ENCODE measurements at regions of chr2 and their contacts with region 1.

Region 1: GRCh38 chr2:210528716-210529115 is 27.7 kb upstream of the CPS1 start:
- DNase-seq: no peak
- ATAC-seq: no peak
- H3K4me3 ChIP-seq: no peak overlapping the region
- H3K4me3 Mint-ChIP-seq: no peak overlapping the region
- H3K27ac ChIP-seq: no peak overlapping the region
- H3K27ac Mint-ChIP-seq: no peak overlapping the region
- H3K4me1 ChIP-seq: no peaks in the 10 kb centered on the region
- H3K4me1 Mint-ChIP-seq: no peaks in the 10 kb centered on the region
- H3K27me3 ChIP-seq: no peaks in the 10 kb centered on the region
- H3K27me3 Mint-ChIP-seq: peaks cover 0 to 13% of the 10 kb centered on the region in 2 donors

Region 2: GRCh38 chr2:209937893-209938292 is 590.8 kb before region 1 on chr2:
- CTCF ChIA-PET with region 1: no interaction called
- POLR2A ChIA-PET with region 1: interaction called in 1 of 2 experiments, 11 read pairs
- DNase-seq: no peak
- ATAC-seq: no peak
- H3K4me3 ChIP-seq: no peak overlapping the region
- H3K4me3 Mint-ChIP-seq: no peak overlapping the region
- H3K27ac ChIP-seq: no peak overlapping the region
- H3K27ac Mint-ChIP-seq: no peak overlapping the region
- H3K4me1 ChIP-seq: no peaks in the 10 kb centered on the region
- H3K4me1 Mint-ChIP-seq: no peaks in the 10 kb centered on the region
- H3K27me3 ChIP-seq: no peaks in the 10 kb centered on the region
- H3K27me3 Mint-ChIP-seq: peaks cover 11 to 18% of the 10 kb centered on the region in 2 donors

Region 3: DNA sequence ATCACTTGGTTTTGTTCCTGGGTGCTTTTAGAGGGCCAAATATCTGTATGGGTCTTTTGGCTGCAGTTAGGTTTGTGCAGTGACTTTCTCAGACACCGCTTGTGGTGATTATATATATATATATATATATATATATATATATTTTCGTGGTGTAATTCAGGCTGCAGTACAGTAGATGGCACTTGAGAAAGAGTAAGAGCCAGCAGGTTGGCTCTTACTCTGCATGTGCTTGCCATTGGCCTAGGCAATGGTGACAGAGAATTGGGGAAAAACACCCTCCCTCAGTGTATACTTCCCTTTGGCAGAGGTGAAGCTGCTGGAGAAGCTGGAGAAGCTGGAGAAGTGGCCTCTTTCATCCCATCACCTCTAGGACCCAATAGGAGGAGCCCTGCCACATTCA is 191.6 kb before region 1 on chr2:
- CTCF ChIA-PET with region 1: no interaction called
- POLR2A ChIA-PET with region 1: no interaction called
- DNase-seq: no peak
- ATAC-seq: no peak
- H3K4me3 ChIP-seq: no peak overlapping the region
- H3K4me3 Mint-ChIP-seq: no peak overlapping the region
- H3K27ac ChIP-seq: no peak overlapping the region
- H3K27ac Mint-ChIP-seq: no peak overlapping the region
- H3K4me1 ChIP-seq: no peaks in the 10 kb centered on the region
- H3K4me1 Mint-ChIP-seq: no peaks in the 10 kb centered on the region
- H3K27me3 ChIP-seq: no peaks in the 10 kb centered on the region
- H3K27me3 Mint-ChIP-seq: peaks cover 4 to 5% of the 10 kb centered on the region in 2 donors